ENCODE measurements at regions of chr4 and their contacts with region 1.

Region 1: GRCh38 chr4:82428969-82429727 is 1.1 kb downstream of the HNRNPDL start:
- DNase-seq: peak; percentile 90 to 99 (median 94)
- ATAC-seq: peak; percentile 79
- H3K4me3 ChIP-seq: peak overlapping the region; percentile 96
- H3K4me3 Mint-ChIP-seq: peak overlapping the region; percentile 98 to 100 (median 99)
- H3K27ac ChIP-seq: peak overlapping the region; percentile 99
- H3K27ac Mint-ChIP-seq: peak overlapping the region; percentile 98 to 100 (median 99)
- H3K4me1 ChIP-seq: peaks cover 28 to 39% of the 10 kb centered on the region in 2 donors
- H3K4me1 Mint-ChIP-seq: peaks cover 40 to 81% (median 69%) of the 10 kb centered on the region in 7 donors
- H3K27me3 ChIP-seq: no peaks in the 10 kb centered on the region
- H3K27me3 Mint-ChIP-seq: peaks cover 0 to 2% (median 0%) of the 10 kb centered on the region in 5 donors

Region 2: GRCh38 chr4:81494031-81494431 is 935.1 kb before region 1 on chr4:
- CTCF ChIA-PET with region 1: no interaction called
- POLR2A ChIA-PET with region 1: no interaction called
- intact Hi-C with region 1: loop called in 1 of 2 experiments (anchors 1 kb)
- DNase-seq: peak in 4 of 9 donors; percentile 29 to 46 (median 38)
- ATAC-seq: peak; percentile 33
- H3K4me3 ChIP-seq: peak overlapping the region; percentile 47
- H3K4me3 Mint-ChIP-seq: peak overlapping the region; percentile 47 to 82 (median 76)
- H3K27ac ChIP-seq: peak overlapping the region; percentile 66
- H3K27ac Mint-ChIP-seq: peak overlapping the region; percentile 76 to 99 (median 94)
- H3K4me1 ChIP-seq: peaks cover 27 to 39% of the 10 kb centered on the region in 2 donors
- H3K4me1 Mint-ChIP-seq: peaks cover 27 to 62% (median 49%) of the 10 kb centered on the region in 7 donors
- H3K27me3 ChIP-seq: no peaks in the 10 kb centered on the region
- H3K27me3 Mint-ChIP-seq: peaks cover 0 to 8% (median 0%) of the 10 kb centered on the region in 5 donors

Region 3: GRCh38 chr4:82360298-82361177 is 68.6 kb before region 1 on chr4:
- CTCF ChIA-PET with region 1: interaction called, 6 read pairs
- POLR2A ChIA-PET with region 1: interaction called, 28 read pairs
- intact Hi-C with region 1: no loop called
- DNase-seq: peak in 6 of 9 donors; percentile 17 to 33 (median 31)
- ATAC-seq: peak; percentile 70
- H3K4me3 ChIP-seq: no peak overlapping the region
- H3K4me3 Mint-ChIP-seq: peak overlapping the region in 7 of 10 donors; percentile 0 to 56 (median 36)
- H3K27ac ChIP-seq: peak overlapping the region; percentile 18
- H3K27ac Mint-ChIP-seq: peak overlapping the region in 8 of 9 donors; percentile 34 to 85 (median 54)
- H3K4me1 ChIP-seq: peaks cover 62 to 74% of the 10 kb centered on the region in 2 donors
- H3K4me1 Mint-ChIP-seq: peaks cover 64 to 98% (median 89%) of the 10 kb centered on the region in 7 donors
- H3K27me3 ChIP-seq: no peaks in the 10 kb centered on the region
- H3K27me3 Mint-ChIP-seq: no peaks in the 10 kb centered on the region

Region 4: GRCh38 chr4:82379964-82380733 is 49.0 kb before region 1 on chr4:
- CTCF ChIA-PET with region 1: interaction called, 4 read pairs
- POLR2A ChIA-PET with region 1: interaction called, 95 read pairs
- intact Hi-C with region 1: no loop called
- DNase-seq: no peak
- ATAC-seq: no peak
- H3K4me3 ChIP-seq: no peak overlapping the region
- H3K4me3 Mint-ChIP-seq: no peak overlapping the region
- H3K27ac ChIP-seq: no peak overlapping the region
- H3K27ac Mint-ChIP-seq: no peak overlapping the region
- H3K4me1 ChIP-seq: peaks cover 4 to 12% of the 10 kb centered on the region in 2 donors
- H3K4me1 Mint-ChIP-seq: peaks cover 20 to 42% (median 32%) of the 10 kb centered on the region in 7 donors
- H3K27me3 ChIP-seq: no peaks in the 10 kb centered on the region
- H3K27me3 Mint-ChIP-seq: no peaks in the 10 kb centered on the region

Region 5: GRCh38 chr4:82900331-82901128 is 471.4 kb after region 1 on chr4 and contains the start of gene THAP9:
- CTCF ChIA-PET with region 1: no interaction called
- POLR2A ChIA-PET with region 1: interaction called, 11 read pairs
- intact Hi-C with region 1: loop called (anchors 1 kb)
- DNase-seq: peak; percentile 92 to 100 (median 98)
- ATAC-seq: peak; percentile 91
- H3K4me3 ChIP-seq: peak within 1 kb of the TSS; percentile 91
- H3K4me3 Mint-ChIP-seq: no peak within 1 kb of the TSS
- H3K27ac ChIP-seq: peak within 1 kb of the TSS; percentile 98
- H3K27ac Mint-ChIP-seq: no peak within 1 kb of the TSS
- H3K4me1 ChIP-seq: peaks cover 13 to 15% of the 10 kb centered on the region in 2 donors
- H3K4me1 Mint-ChIP-seq: peaks cover 0 to 30% (median 15%) of the 10 kb centered on the region in 7 donors
- H3K27me3 ChIP-seq: no peaks in the 10 kb centered on the region
- H3K27me3 Mint-ChIP-seq: peaks cover 0 to 2% (median 0%) of the 10 kb centered on the region in 5 donors
- total RNA-seq, gene THAP9: 2.2 to 4.9 (median 4.4) TPM

Region 6: GRCh38 chr4:83484500-83485461 is 1055.6 kb after region 1 on chr4 and contains the start of gene ABRAXAS1:
- CTCF ChIA-PET with region 1: no interaction called
- POLR2A ChIA-PET with region 1: interaction called, 5 read pairs
- intact Hi-C with region 1: loop called in 1 of 2 experiments (anchors 1 kb)
- DNase-seq: peak; percentile 91 to 97 (median 96)
- ATAC-seq: peak; percentile 98
- H3K4me3 ChIP-seq: peak within 1 kb of the TSS; percentile 93
- H3K4me3 Mint-ChIP-seq: peak within 1 kb of the TSS; percentile 92 to 99 (median 98)
- H3K27ac ChIP-seq: peak within 1 kb of the TSS; percentile 86
- H3K27ac Mint-ChIP-seq: peak within 1 kb of the TSS; percentile 93 to 99 (median 98)
- H3K4me1 ChIP-seq: peaks cover 4 to 11% of the 10 kb centered on the region in 2 donors
- H3K4me1 Mint-ChIP-seq: peaks cover 15 to 49% (median 36%) of the 10 kb centered on the region in 7 donors
- H3K27me3 ChIP-seq: no peaks in the 10 kb centered on the region
- H3K27me3 Mint-ChIP-seq: peaks cover 0 to under 1% (median 0%) of the 10 kb centered on the region in 5 donors
- total RNA-seq, gene ABRAXAS1: 13.9 to 47.6 (median 24.9) TPM